HEK293 (cell line): ENCODE measurements at regions of chr17 and their contacts with region 1.

Region 1: GRCh38 chr17:40075201-40075941 is 12.6 kb downstream of the THRA start:
- H3K4me3 ChIP-seq: no peak overlapping the region
- H3K27ac ChIP-seq: no peak overlapping the region
- H3K4me1 ChIP-seq: peaks cover 22% of the 10 kb centered on the region
- CTCF ChIP-seq: peak; percentile 80

Region 2: GRCh38 chr17:39695089-39695474 is 380.3 kb before region 1 on chr17:
- CTCF ChIA-PET with region 1: no interaction called
- POLR2A ChIA-PET with region 1: no interaction called
- H3K4me3 ChIP-seq: no peak overlapping the region
- H3K27ac ChIP-seq: no peak overlapping the region
- H3K4me1 ChIP-seq: peaks cover 5% of the 10 kb centered on the region; the same call in 1 of the 2 replicates
- CTCF ChIP-seq: no peak

Region 3: DNA sequence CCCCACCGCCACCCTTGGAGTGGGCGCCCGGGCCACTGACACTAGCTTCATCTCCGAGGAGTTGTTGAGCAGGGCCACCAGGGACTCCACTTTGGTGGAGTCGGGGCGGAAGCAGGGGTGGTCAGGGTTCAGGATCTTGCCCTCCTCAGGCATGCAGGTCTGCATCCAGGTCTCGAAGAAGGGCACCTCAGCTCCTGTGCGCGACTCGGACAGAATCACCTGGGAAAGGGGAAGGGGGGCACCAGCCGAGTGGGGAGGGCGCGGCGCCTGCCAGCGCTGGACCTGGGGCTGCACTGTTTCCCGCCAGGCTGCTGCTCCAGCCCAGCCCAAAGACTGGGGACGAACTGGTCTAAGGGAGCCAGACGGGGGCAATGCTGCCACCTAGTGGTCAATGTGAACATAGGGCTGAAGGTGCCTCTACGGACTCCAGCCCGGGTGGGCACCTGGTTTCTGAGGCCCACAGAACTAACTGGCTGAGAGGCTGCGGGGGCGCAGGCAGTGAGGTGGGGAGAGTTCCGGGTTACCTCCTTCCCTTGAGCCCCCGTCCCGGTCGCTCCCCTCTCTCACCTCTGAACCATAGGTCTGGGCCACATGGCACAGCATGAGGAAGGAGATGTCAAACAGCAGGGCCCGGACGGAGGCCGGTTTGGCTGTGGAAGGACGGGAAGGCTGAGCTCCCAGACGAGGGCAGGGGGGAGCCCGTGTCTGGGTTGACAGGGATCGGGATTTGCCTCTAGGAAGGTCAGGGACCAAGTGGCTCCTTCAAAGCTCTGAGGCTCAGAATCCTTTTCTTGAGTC is 48.4 kb before region 1 on chr17:
- CTCF ChIA-PET with region 1: interaction called, 154 read pairs
- POLR2A ChIA-PET with region 1: no interaction called
- H3K4me3 ChIP-seq: no peak overlapping the region
- H3K27ac ChIP-seq: no peak overlapping the region
- H3K4me1 ChIP-seq: peaks cover 16% of the 10 kb centered on the region
- CTCF ChIP-seq: peak; percentile 82

Region 4: DNA sequence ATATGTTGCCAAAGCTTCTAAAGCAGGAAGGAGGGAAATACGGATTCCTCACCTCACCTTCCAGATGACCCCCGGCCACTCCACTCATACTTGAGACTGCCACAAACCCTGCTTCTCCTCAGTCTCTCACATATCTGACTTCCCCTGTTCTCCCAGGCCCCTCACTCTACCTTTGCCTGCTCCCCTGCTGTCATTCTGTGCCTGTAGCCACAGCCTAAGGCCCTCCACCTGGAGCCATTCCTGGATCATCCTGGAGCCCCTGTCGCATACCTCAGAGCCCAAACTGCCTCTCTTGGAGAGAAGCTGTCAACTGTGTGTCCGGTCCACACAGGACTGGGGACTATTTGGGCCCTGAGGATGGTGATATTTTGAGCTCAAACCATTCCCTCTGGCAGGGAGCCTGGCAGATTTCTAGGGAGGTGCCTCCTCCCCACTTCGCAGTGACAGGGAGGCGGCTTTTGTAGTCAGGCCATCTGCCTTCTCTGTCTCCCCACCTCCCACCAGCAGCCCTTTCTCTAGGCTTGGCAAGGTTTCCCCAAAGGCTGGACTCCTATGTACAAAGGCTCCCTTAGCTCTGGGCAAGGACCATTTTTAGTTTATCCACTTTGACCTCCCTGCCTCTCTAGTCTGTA is 18.9 kb before region 1 on chr17:
- CTCF ChIA-PET with region 1: interaction called, 166 read pairs
- POLR2A ChIA-PET with region 1: interaction called, 13 read pairs
- H3K4me3 ChIP-seq: no peak overlapping the region
- H3K27ac ChIP-seq: no peak overlapping the region
- H3K4me1 ChIP-seq: 0 out of 2 replicates have a peak, but pooled peaks cover 3% of the 10 kb centered on the region
- CTCF ChIP-seq: no peak

Region 5: DNA sequence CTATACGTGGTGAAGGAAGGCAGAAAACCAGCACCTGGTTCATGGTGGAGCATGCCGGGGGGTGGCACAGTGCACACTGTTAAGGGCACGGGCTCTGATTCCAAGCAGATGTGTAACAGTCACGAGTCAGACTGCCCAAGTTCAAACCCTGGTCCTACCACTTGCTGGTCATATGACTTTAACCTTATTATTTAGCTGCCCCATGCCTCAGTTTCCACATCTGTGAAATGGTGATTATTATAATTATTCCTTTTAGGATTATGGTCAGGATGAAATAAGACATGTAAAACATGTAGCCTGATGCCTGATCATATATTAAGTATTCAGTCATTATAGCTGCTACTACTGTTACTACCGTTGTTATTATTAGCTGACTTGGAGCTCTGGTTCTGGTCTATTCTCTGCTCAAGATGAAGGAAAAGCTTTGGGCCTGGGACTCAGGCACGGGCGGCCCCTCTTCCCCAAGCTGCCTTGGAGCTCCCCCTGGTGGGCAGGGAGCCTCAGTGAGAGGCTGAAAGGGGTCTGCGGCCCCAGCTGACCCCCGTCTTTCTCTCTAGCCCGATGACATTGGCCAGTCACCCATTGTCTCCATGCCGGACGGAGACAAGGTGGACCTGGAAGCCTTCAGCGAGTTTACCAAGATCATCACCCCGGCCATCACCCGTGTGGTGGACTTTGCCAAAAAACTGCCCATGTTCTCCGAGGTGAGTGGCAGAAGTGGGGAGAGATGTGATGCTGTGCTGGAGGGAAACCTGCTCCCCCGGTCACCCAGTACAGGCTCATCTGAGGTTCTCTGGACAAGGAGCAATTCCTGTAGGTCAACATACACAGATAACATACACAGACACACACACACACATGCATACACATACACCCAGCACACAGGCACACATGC is 11.0 kb after region 1 on chr17:
- CTCF ChIA-PET with region 1: interaction called, 56 read pairs
- POLR2A ChIA-PET with region 1: interaction called, 4 read pairs
- H3K4me3 ChIP-seq: no peak overlapping the region
- H3K27ac ChIP-seq: no peak overlapping the region
- H3K4me1 ChIP-seq: no peaks in the 10 kb centered on the region
- CTCF ChIP-seq: peak; percentile 65; the same call in 1 of the 2 replicates

Region 6: DNA sequence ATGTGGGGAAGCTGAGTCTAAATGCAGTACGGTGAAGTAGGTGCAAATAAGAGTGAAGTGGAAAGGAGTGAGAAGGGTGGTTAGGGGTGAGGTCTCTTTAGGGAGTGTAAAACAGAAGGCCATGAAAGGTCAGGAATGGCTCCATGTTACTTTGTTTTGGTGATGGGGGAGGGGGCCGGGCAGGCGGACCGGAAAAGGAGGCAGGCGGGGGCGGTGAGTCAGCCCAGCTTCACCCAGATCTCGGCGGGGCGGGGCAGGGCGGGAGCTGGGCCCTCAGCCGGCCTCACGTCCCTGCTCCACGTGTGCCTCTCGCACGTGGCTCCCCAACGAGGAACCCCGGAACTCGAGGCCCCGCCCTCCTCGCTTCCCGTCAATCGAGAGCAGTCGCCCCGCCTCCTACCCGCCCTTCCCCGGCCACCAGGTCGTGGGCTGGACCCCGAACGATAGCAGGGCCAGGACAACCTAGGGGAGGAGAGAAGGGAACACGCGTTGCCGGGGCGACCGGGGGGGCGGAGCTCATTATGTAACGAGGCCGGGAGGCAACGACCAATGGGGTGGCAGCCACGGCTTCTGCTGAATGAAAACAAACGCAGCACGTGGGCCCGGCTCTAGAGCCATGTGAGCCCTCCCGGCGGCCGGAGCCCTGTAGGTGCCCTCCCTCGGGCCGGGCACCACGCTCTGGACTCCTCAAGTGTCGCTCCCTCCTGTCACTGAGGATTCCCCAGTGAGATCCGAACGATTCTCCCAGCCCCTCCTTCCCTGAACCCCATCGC is 23.7 kb after region 1 on chr17:
- CTCF ChIA-PET with region 1: interaction called, 61 read pairs
- POLR2A ChIA-PET with region 1: interaction called, 7 read pairs
- H3K4me3 ChIP-seq: peak overlapping the region; percentile 23
- H3K27ac ChIP-seq: peak overlapping the region; percentile 26; the same call in 1 of the 2 replicates
- H3K4me1 ChIP-seq: peaks cover 16% of the 10 kb centered on the region
- CTCF ChIP-seq: no peak